HEK293 (cell line): ENCODE measurements at regions of chr9 and their contacts with region 1.

Region 1: DNA sequence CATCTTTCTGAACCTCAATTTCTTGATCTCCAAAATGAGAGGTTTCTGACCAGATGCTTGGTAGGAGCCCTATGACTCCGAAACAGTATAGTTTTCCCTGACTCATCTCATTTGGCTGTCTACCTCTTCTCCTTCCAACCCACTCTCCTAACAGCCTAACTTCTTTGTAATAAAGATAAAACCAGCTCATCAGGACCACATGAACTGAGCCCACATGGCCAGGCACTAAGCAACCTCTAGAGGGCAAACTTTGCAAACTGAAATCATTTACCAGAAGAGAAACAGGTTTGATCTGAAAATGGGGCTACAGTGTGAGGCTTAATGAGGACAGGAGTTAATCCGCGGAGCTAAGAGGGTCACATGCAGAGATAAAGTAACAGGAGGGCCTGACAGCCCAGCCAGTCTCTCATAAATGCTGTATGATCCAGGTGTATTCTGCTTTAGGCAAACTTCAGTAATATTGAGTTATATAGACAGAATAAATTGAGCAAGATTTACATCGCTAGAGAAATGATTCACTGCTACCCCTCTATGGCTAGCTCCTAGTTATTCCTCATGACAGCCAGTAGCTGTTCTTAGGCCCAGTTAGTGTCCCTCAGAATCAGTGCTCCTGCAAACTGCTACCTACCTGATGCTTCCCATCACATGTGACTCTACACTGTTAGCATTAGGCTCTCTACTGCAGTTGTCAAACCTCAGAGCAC is 64.6 kb downstream of the ABCA1 start:
- H3K4me3 ChIP-seq: no peak overlapping the region
- H3K27ac ChIP-seq: no peak overlapping the region
- H3K4me1 ChIP-seq: no peaks in the 10 kb centered on the region
- CTCF ChIP-seq: no peak

Region 2: GRCh38 chr9:104780799-104781395 is 82.4 kb before region 1 on chr9:
- CTCF ChIA-PET with region 1: interaction called, 14 read pairs
- POLR2A ChIA-PET with region 1: no interaction called
- H3K4me3 ChIP-seq: no peak overlapping the region
- H3K27ac ChIP-seq: no peak overlapping the region
- H3K4me1 ChIP-seq: no peaks in the 10 kb centered on the region
- CTCF ChIP-seq: no peak

Region 3: GRCh38 chr9:104808035-104808614 is 55.2 kb before region 1 on chr9:
- CTCF ChIA-PET with region 1: interaction called, 11 read pairs
- POLR2A ChIA-PET with region 1: no interaction called
- H3K4me3 ChIP-seq: no peak overlapping the region
- H3K27ac ChIP-seq: no peak overlapping the region
- H3K4me1 ChIP-seq: no peaks in the 10 kb centered on the region
- CTCF ChIP-seq: no peak

Region 4: GRCh38 chr9:104923740-104924139 is 60.4 kb after region 1 on chr9:
- CTCF ChIA-PET with region 1: interaction called, 11 read pairs
- POLR2A ChIA-PET with region 1: interaction called, 3 read pairs
- H3K4me3 ChIP-seq: no peak overlapping the region
- H3K27ac ChIP-seq: no peak overlapping the region
- H3K4me1 ChIP-seq: no peaks in the 10 kb centered on the region
- CTCF ChIP-seq: no peak

Region 5: GRCh38 chr9:104997536-104997935 is 134.2 kb after region 1 on chr9:
- CTCF ChIA-PET with region 1: no interaction called
- POLR2A ChIA-PET with region 1: no interaction called
- H3K4me3 ChIP-seq: no peak overlapping the region
- H3K27ac ChIP-seq: no peak overlapping the region
- H3K4me1 ChIP-seq: no peaks in the 10 kb centered on the region
- CTCF ChIP-seq: no peak

Region 6: GRCh38 chr9:105157130-105157583 is 293.8 kb after region 1 on chr9:
- CTCF ChIA-PET with region 1: interaction called, 20 read pairs
- POLR2A ChIA-PET with region 1: no interaction called
- H3K4me3 ChIP-seq: no peak overlapping the region
- H3K27ac ChIP-seq: no peak overlapping the region
- H3K4me1 ChIP-seq: no peaks in the 10 kb centered on the region
- CTCF ChIP-seq: no peak

Region 7: GRCh38 chr9:105414947-105415661 is 551.8 kb after region 1 on chr9:
- CTCF ChIA-PET with region 1: interaction called, 43 read pairs
- POLR2A ChIA-PET with region 1: interaction called, 3 read pairs
- H3K4me3 ChIP-seq: no peak overlapping the region
- H3K27ac ChIP-seq: no peak overlapping the region
- H3K4me1 ChIP-seq: no peaks in the 10 kb centered on the region
- CTCF ChIP-seq: 0 out of 2 replicates have a peak, but pooled peaks have one; percentile 52